ENCODE measurements at regions of chr15 and their contacts with region 1.

Region 1: DNA sequence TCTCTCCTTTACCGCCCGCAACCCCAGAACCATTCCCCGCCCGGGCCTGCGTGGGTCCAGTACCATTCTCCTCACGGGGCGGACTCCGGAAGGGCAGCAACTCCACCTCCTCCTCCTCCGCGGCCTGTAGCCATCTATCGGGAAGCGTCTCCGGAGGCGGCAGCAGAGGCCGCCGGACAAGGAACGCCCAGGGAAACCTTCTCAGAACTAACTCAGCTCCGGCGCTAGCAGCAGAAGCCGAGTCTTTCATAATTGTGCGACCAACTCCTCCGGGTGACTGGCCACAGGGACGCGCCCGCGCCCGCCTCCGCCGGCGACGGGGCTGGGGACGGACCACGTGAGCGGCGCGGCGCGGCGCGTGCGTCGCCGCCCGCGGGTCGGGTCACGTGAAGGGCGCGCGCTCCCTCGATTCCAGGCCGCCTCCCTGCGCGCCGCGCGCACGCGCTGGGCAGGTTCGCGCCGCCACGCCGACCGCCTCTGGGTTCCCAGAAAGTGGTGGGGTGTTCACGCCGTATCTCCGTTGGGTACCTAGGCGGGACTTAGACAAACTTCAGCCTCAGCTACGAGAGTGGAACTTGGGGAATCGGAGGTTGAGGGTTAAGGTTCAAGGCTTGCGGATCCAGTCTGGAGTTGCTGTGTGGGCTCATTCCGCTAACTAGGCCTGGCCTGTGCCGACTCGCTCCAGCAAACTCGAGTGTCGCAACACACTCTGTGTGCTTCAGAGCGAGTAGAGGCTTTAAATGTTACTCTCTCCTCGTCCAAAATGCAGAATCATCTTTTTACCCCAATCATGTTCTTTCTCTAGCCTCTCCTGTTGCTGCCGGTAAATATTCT is at the start of gene TRPM7:
- DNase-seq: peak; percentile 87
- H3K4me3 Mint-ChIP-seq: peak within 1 kb of the TSS; percentile 99
- H3K27ac Mint-ChIP-seq: peak within 1 kb of the TSS; percentile 98
- H3K4me1 Mint-ChIP-seq: peaks cover 52% of the 10 kb centered on the region
- H3K27me3 Mint-ChIP-seq: no peaks in the 10 kb centered on the region
- total RNA-seq, gene TRPM7: 31.1 to 32.7 TPM

Region 2: DNA sequence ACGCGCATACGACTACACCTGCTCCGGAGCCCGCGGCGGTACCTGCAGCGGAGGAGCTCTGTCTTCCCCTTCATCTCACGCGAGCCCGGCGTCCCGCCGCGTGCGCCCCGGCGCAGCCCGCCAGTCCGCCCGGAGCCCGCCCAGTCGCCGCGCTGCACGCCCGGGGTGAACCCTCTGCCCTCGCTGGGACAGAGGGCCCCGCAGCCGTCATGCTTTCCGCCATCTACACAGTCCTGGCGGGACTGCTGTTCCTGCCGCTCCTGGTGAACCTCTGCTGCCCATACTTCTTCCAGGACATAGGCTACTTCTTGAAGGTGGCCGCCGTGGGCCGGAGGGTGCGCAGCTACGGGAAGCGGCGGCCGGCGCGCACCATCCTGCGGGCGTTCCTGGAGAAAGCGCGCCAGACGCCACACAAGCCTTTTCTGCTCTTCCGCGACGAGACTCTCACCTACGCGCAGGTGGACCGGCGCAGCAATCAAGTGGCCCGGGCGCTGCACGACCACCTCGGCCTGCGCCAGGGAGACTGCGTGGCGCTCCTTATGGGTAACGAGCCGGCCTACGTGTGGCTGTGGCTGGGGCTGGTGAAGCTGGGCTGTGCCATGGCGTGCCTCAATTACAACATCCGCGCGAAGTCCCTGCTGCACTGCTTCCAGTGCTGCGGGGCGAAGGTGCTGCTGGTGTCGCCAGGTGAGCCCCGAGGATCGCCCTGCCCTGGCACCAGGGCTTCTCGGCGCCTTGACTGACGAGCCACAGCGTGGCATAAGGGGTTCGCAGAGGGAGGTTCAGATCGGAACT is 504.3 kb before region 1 on chr15:
- CTCF ChIA-PET with region 1: no interaction called
- intact Hi-C with region 1: loop called (anchors 10 kb)
- DNase-seq: peak; percentile 73
- H3K4me3 Mint-ChIP-seq: peak overlapping the region; percentile 98
- H3K27ac Mint-ChIP-seq: peak overlapping the region; percentile 87
- H3K4me1 Mint-ChIP-seq: peaks cover 29% of the 10 kb centered on the region
- H3K27me3 Mint-ChIP-seq: peaks cover 25% of the 10 kb centered on the region

Region 3: DNA sequence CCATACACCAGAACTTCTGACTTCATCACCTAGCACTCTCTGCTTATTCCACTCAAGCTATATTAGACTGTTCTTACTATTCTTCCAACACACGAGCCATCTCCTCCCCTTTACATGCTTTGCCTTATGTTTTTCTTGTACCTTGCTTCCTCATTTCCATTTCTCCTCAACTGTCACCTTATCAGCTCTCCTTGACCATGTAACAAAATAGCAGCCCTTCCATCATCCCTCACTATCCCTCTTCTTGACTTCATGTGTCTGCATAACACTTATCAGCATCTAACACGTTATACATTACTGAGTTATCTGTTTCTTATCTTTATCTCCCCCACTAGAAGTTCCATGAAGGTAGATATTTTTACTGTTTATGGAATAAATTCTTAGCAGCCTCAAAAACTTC is 45.4 kb before region 1 on chr15:
- CTCF ChIA-PET with region 1: no interaction called
- intact Hi-C with region 1: loop called (anchors 2 kb)
- DNase-seq: no peak
- H3K4me3 Mint-ChIP-seq: no peak overlapping the region
- H3K27ac Mint-ChIP-seq: no peak overlapping the region
- H3K4me1 Mint-ChIP-seq: peaks cover 2% of the 10 kb centered on the region
- H3K27me3 Mint-ChIP-seq: no peaks in the 10 kb centered on the region

Region 4: DNA sequence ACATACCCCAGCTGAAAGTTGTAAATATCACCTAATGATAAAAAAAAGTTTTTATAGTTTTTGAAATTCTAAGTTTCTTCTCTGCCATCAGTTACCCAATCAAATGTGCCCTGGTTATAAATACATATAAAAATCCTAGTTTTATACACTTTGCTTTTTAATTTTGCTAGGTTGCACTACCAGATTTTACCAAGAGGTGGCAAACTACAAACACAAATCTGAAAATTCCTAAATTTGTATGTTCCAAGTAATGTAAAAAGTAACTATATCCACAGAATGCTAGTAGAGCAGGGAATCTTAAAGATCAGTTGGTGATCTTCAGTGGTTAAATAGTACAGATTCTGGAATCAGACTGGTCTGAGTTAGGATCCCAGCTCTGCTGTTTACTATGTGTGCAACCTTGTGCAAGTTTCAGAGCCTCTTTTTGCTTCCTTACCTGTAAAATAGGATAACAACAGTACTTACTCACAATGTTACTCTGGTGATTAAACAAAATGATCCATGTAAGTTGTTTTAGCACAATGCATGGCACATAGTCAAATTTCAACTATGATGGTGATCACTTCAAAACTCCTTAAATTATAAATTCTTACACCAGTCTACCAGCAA is 11.0 kb before region 1 on chr15:
- CTCF ChIA-PET with region 1: interaction called, 4 read pairs
- intact Hi-C with region 1: loop called (anchors 1 kb)
- DNase-seq: no peak
- H3K4me3 Mint-ChIP-seq: no peak overlapping the region
- H3K27ac Mint-ChIP-seq: no peak overlapping the region
- H3K4me1 Mint-ChIP-seq: peaks cover 31% of the 10 kb centered on the region
- H3K27me3 Mint-ChIP-seq: no peaks in the 10 kb centered on the region

Region 5: DNA sequence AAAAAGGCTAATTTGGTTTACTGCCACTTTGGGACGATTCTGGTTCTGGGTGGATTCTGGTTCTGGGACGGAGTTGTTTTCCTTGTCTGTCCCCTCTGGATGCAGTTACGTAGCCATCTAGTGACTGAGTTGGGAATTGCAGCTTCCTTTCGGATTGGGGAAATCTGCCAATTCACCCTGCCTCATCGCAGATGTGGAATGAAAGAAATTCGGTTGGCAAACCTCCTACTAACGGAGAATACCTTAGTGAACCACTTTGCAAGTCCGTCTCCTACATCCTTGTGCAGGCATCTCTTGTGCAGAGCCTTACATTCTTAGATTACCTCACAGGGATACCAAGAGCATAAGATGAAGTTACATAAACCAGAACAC is 190.3 kb after region 1 on chr15:
- CTCF ChIA-PET with region 1: interaction called, 5 read pairs
- intact Hi-C with region 1: loop called (anchors 1 kb)
- DNase-seq: peak; percentile 85
- H3K4me3 Mint-ChIP-seq: peak overlapping the region; percentile 75
- H3K27ac Mint-ChIP-seq: peak overlapping the region; percentile 46
- H3K4me1 Mint-ChIP-seq: peaks cover 53% of the 10 kb centered on the region
- H3K27me3 Mint-ChIP-seq: peaks cover 4% of the 10 kb centered on the region

Measured in activated naive CD4-positive, alpha-beta T cell treated with anti-CD3 and anti-CD28 coated beads for 36 hours (primary cell).